Heart left ventricle (tissue), 16 donors: ENCODE measurements at regions of chr18 and their contacts with region 1.

Region 1: GRCh38 chr18:13216092-13216582 is 2.4 kb upstream of the LDLRAD4 start:
- DNase-seq: peak; percentile 70 to 85 (median 79)
- ATAC-seq: peak; percentile 38 to 76 (median 68)
- H3K4me3 ChIP-seq: peak overlapping the region in 2 of 12 donors; percentile 83 to 89
- H3K27ac ChIP-seq: peak overlapping the region in 7 of 12 donors; percentile 22 to 95 (median 91)
- H3K4me1 ChIP-seq: peaks cover 4 to 43% (median 30%) of the 10 kb centered on the region in 12 donors
- H3K27me3 ChIP-seq: no peaks in the 10 kb centered on the region
- CTCF ChIP-seq: peak; percentile 46 to 84 (median 72)
- POLR2A ChIP-seq: no peak

Region 2: DNA sequence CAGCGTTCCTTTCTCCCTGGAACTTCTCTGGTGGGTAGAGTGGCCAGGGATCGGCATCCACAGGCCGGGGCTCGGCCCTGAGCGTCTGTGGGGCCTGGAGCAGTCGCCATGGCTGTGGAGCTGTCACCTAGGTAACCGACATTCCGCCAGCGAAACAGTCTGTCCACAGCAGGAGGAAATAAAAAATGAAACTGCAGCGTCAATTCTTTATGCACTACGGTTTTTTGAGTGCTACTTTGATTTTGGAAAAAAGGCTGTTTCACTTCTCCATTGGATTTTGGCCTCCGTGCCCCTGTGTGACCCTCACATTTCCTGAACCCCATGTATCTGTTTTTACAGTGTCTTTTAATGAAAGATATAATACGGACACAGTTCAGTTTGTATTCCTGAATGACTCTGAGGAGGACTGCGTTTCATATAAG is 165.8 kb after region 1 on chr18:
- intact Hi-C with region 1: loop called in 8 of 10 experiments (anchors 2 to 5 kb)
- DNase-seq: peak; percentile 76 to 82 (median 80)
- ATAC-seq: peak; percentile 72 to 84 (median 75)
- H3K4me3 ChIP-seq: peak overlapping the region in 9 of 12 donors; percentile 15 to 55 (median 39)
- H3K27ac ChIP-seq: peak overlapping the region; percentile 39 to 97 (median 80)
- H3K4me1 ChIP-seq: peaks cover 0 to 75% (median 59%) of the 10 kb centered on the region in 12 donors
- H3K27me3 ChIP-seq: no peaks in the 10 kb centered on the region
- CTCF ChIP-seq: no peak
- POLR2A ChIP-seq: no peak

Region 3: DNA sequence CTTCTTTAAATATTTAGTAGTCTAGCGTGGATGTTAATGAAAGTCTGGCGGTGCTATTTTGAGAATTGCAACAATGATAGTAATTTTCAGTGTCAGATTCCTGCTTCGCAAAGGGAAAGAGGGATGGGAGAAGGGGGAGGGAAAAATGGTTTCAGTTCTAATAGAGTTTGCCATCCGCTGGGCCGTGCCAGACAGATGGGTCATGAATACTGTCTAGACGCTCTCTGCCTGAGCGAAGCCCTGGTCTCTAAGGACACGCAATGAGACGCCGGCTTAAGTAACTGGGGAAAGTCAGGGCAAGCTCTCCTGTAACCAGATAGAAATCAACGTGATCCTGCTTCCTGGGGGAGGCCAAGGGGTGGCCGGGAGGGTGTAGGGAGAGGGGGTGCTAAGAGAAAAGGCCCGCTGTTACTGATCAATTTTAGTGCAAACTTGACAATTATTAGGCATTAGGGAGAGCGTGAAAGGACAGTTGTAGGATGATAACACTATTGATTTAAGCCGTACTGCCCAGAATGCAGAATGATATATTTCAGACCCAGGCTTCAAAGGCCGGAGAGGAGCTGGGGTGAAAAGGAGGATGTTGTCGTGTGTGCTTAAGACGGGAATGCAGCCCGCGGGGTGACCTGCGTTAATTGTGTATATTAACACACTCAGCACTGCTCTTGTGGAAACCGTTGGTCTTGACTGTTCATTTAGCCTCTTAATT is 231.6 kb after region 1 on chr18:
- intact Hi-C with region 1: loop called in 3 of 10 experiments (anchors 5 to 10 kb)
- DNase-seq: peak in 3 of 5 donors; percentile 49 to 63 (median 58)
- ATAC-seq: peak in 3 of 4 donors; percentile 31 to 59 (median 39)
- H3K4me3 ChIP-seq: peak overlapping the region in 2 of 12 donors; percentile 0 to 22
- H3K27ac ChIP-seq: peak overlapping the region in 3 of 12 donors; percentile 12 to 51 (median 32)
- H3K4me1 ChIP-seq: peaks cover 0 to 57% (median 27%) of the 10 kb centered on the region in 12 donors
- H3K27me3 ChIP-seq: no peaks in the 10 kb centered on the region
- CTCF ChIP-seq: no peak
- POLR2A ChIP-seq: no peak

Region 4: DNA sequence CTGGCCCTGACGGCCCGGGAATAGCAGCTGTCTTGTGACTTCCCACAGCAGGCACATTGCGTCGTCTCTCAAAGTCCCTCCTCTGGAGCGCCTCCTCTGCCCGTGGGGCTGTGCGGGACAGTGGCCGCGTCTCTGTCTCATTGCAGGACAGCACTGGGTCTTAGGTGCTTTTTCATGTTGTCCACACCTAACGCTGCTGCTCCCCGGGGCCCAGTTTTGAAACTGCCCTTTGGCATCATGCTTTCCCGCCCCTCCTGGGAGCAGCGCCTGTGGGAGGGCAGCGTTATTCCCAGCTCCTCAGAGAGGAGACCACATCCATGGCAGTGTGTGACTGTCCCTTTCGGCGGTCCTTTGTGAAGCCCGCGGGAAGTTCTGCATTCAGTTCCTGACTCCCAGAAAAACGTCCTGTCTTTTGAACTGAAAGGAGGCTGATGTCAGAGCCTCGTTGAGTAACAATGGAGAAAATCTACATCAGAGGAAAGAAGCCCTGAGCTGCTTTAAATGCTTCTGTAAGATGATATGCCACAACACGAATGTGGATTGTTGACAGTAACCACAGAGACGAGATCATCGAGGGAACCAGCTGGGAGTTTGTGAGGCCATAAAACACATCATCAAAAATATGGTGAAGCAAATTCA is 284.2 kb after region 1 on chr18:
- intact Hi-C with region 1: loop called in 1 of 10 experiments (anchors 1 kb)
- DNase-seq: peak; percentile 51 to 76 (median 66)
- ATAC-seq: peak; percentile 69 to 84 (median 80)
- H3K4me3 ChIP-seq: peak overlapping the region in 10 of 12 donors; percentile 7 to 47 (median 36)
- H3K27ac ChIP-seq: peak overlapping the region; percentile 35 to 93 (median 83)
- H3K4me1 ChIP-seq: peaks cover 5 to 50% (median 36%) of the 10 kb centered on the region in 12 donors
- H3K27me3 ChIP-seq: no peaks in the 10 kb centered on the region
- CTCF ChIP-seq: peak in 3 of 12 donors; percentile 23 to 29 (median 26)
- POLR2A ChIP-seq: peak in 1 of 2 donors; percentile 22

Region 5: GRCh38 chr18:13530879-13531387 is 314.8 kb after region 1 on chr18:
- intact Hi-C with region 1: loop called (anchors 1 to 5 kb)
- DNase-seq: peak in 4 of 5 donors; percentile 59 to 78 (median 69)
- ATAC-seq: peak; percentile 81 to 92 (median 91)
- H3K4me3 ChIP-seq: no peak overlapping the region
- H3K27ac ChIP-seq: peak overlapping the region in 4 of 12 donors; percentile 5 to 62 (median 30)
- H3K4me1 ChIP-seq: peaks cover 0 to 20% (median 8%) of the 10 kb centered on the region in 12 donors
- H3K27me3 ChIP-seq: no peaks in the 10 kb centered on the region
- CTCF ChIP-seq: peak; percentile 34 to 72 (median 60)
- POLR2A ChIP-seq: no peak

Region 6: DNA sequence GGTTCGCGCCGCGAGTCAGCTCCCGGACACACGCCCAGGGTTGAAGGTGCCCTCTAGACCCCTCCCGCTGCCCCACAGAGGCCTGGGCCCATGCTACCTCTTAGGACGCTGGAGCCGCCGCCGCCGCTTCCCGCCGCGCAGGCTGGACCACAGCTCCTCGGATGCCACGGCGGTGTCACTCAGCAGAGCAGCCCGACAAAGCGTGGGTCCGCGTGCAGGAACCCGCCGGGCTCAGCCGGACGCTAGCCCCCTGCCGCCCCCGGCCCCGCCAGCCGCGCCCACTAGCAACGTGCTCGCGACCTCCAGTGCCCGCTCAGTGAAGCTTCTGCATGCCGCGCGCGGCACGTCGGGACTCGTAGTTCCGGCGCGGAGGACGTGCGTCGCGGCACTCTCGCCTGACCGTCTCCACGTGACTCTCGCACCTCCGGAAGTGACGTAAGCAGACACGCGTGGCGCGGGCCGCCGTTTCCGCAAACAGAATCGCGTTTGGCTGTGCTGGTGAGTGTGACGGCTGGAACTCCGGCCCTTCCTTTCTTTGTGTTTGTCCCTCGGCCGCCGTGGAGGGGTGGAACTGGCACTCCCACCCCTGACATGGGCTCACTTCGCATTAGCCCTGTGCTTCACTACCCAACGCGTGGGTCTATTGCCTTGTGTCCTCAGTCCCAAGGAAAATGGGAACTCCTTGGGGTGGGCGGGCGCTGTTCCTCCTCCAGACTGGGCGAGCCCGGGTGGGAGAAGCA is 510.3 kb after region 1 on chr18 and contains the starts of genes FAM210A and RNMT:
- intact Hi-C with region 1: loop called in 6 of 10 experiments (anchors 5 to 10 kb)
- DNase-seq: peak; percentile 96 to 98 (median 98)
- ATAC-seq: peak; percentile 96 to 98 (median 98)
- H3K4me3 ChIP-seq: peak within 1 kb of the TSS; percentile 72 to 97 (median 86)
- H3K27ac ChIP-seq: peak within 1 kb of the TSS; percentile 84 to 99 (median 91)
- H3K4me1 ChIP-seq: peaks cover 0 to 50% (median 24%) of the 10 kb centered on the region in 12 donors
- H3K27me3 ChIP-seq: no peaks in the 10 kb centered on the region
- CTCF ChIP-seq: peak in 5 of 12 donors; percentile 19 to 46 (median 41)
- POLR2A ChIP-seq: peak in 1 of 2 donors; percentile 71
- total RNA-seq, gene FAM210A: 29.3 to 66.4 (median 48.7) TPM
- total RNA-seq, gene RNMT: 19.9 to 38.0 (median 26.6) TPM